GM10248 (cell line): ENCODE measurements at regions of chr6 and their contacts with region 1.

Region 1: DNA sequence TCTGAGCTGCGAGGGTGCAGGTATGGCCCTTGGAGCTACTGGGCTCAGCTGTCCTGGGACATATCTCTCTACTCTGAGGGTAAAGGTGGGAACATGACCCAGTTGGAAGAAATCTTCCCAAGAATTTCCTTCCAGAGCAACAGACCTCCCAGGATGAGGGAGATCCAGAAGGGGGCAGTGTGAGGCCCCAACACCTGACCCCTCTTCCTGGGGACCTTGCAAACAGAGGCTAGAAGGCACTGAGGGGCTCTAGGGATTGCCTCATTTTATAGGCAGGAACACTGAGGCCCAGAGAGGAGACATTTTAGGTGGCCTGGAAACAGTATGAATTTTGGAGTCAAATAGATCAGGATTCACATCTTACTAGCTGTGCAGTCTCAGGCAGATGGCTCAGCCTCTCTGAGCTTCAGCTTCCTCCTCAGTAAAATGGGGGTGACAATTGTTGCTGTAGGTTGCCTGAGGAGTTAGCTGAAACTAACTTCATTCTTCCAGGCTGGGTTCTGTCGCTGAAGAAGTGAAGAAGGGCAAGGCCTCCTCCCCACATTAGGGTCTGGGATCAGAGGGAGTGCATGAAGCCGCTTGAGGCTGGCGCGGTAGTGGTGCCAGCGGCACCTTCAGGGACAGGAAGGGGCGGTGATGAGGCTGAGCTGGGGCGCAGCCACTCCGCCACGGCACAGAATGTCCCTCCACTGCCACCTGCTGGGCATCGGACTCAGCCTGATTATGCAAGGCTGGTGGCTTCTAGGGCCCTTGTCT is 11.4 kb downstream of the KCNK17 start:
- DNase-seq: peak; percentile 91
- CTCF ChIP-seq: peak; percentile 96

Region 2: DNA sequence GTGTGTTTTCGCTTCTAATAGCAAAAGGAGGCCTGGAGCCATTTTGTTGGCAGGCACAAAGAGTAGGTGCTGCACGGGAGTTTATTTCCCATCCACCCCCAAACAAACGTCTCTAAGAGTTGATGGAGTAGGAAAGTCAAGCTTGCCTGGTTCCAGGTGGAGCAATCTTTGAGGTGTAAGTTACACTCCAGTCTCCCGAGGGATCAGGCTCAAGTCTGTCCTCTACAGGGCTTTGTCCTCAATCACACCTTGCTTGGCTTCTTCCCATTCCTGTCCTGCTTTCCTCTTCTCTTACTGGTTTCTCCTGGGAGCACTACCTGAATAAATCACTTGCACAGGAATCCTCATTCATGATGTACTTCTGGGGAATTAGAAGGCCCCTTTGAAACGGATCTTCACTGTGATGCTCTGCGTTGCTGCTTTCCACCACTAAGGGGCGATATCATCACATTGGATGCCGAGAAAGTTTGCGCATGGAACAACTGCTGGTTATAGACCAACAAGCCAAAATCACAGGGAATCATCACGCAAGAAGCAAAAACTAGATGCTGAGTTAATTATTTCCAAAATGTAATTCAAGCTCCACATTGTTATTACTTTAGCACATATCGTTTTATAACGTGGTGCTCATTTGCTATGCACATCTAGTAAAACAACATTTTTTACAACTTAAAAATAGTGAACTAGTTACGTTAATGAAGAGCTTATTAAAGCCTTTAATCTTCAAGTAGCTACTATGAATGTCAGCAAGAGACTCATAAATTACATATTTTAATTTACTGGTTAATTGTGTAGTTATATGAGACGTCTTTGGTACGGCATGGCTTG is 430.9 kb before region 1 on chr6:
- CTCF ChIA-PET with region 1: interaction called, 22 read pairs
- POLR2A ChIA-PET with region 1: no interaction called
- DNase-seq: peak; percentile 41
- CTCF ChIP-seq: peak; percentile 91

Region 3: DNA sequence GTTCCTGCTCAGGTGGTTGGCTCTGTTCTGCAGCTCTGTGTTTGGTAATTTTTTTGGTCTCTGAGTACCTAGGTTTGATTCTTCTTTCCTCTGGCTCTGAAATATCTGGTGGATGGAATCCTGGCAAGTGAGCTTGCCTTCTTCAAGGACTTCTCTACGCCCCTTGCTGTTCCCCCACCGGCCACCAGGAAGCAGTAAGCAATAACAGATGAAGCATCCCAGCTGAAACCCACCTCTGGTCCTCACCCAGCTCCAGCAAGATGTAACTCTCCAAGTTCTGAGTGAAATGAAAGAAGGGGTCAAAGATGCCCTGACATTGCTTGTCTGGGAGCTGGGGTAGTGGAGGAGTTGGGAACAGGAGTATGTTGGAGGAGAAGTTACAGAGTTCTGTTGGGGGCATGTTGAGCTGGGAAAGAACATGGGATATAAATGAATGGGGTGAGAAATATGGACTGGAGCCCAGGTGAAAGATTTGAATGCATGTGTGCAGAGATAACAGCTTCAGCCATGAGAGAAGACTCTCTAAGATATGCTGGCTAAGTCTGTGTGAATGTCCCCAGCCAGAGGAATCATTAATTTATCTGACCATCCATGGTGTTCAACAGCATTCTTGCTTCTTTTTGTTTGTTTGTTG is 305.6 kb before region 1 on chr6:
- CTCF ChIA-PET with region 1: interaction called, 13 read pairs
- POLR2A ChIA-PET with region 1: no interaction called
- DNase-seq: peak; percentile 13
- CTCF ChIP-seq: peak; percentile 30

Region 4: DNA sequence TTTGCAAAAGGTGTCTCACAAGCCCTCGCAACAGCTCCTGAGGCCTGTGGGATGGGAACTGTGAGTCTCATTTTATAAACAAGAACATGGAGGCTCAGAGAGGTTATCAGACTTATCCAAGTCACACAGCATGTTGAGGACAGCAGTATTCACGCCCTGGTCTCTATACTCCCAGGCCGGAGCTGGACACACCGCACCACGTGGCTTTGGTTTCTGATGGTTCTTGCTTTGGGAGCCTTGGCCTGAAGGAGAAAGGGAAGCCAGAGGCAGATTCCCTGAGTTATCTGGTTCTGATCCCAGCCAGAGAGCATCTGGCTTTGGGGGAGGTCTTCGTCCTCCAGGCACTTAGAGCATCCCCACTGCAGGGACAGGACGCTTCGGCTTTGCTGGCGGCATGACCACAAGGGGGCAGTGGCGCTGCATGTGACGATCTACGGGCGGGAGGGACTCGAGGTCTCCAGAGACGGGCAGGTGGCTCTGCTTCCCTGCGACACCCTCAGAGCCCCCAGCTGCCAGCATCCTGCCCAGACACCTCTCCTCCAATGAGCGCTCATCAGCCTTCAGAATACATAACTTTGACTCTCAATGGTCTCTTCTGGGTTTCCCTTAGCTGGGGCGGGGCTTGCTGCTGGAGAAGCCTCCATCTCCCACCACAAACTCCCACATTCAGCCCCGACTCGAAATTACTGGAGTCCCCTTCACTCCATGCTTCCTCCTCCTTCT is 136.5 kb before region 1 on chr6:
- CTCF ChIA-PET with region 1: interaction called, 265 read pairs
- POLR2A ChIA-PET with region 1: no interaction called
- DNase-seq: peak; percentile 85
- CTCF ChIP-seq: peak; percentile 96

Region 5: DNA sequence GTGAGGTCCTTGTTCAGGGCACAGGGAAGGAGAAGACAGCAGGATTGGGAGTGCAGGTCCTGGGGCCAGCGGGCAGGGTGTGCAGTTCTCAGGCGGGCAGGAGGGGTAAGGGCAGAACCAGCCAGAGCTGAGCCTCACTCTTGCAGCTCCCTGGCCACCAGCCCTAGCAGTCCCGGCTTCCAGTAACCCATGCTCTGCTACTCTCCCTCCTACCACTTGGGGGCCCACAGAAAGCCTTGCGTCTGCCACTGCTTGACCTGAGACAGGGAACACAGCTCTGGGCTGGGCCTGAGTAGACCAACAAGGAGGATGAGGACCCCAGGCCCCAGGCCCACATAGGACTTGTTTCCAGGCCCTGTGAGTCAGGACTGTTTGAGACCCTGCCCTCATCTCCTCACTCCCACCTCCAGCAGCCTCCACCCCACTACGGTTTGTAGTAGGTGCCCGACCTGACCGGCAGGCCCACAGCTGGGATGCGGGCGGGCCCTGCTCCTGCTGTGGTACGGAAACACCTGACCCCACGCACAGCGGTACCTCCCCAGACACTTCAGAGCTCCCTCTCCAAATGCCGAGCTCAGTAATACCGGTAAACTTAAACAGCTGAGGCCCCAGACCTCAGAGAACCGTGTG is 112.8 kb before region 1 on chr6:
- CTCF ChIA-PET with region 1: interaction called, 15 read pairs
- POLR2A ChIA-PET with region 1: no interaction called
- DNase-seq: peak; percentile 63
- CTCF ChIP-seq: peak; percentile 51

Region 6: DNA sequence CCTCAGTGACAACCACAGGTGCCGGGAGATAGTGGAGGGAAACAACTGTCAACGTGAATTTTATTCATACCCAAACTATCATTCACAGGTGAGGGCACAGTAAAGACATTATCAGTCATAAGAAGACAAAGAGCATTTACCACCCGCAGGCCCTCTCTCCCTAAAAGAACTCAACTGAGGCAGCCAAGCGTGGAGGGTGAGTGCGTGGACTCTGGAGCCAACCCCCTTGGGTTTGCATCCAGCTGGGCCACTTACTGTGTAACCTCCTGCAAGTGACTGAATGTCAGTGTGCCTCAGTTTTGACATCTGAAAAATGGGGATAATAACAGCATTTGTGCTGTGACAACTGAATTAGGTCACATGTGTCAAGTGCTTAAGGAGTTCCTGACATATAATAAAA is 90.2 kb after region 1 on chr6:
- CTCF ChIA-PET with region 1: no interaction called
- POLR2A ChIA-PET with region 1: no interaction called
- DNase-seq: no peak
- CTCF ChIP-seq: no peak